Activated CD4-positive, alpha-beta T cell treated with anti-CD3 and anti-CD28 coated beads, Interleukin-2, amount 10 ng/mL, durations not matched to agents 24 days and 14 days (primary cell): ENCODE measurements at regions of chr2 and their contacts with region 1.

Region 1: GRCh38 chr2:94986392-94986963 is 39.0 kb upstream of the MAL start:
- DNase-seq: peak; percentile 85
- H3K4me3 Mint-ChIP-seq: no peak overlapping the region
- H3K27ac Mint-ChIP-seq: no peak overlapping the region
- H3K4me1 Mint-ChIP-seq: no peaks in the 10 kb centered on the region
- H3K27me3 Mint-ChIP-seq: peaks cover 19% of the 10 kb centered on the region

Region 2: DNA sequence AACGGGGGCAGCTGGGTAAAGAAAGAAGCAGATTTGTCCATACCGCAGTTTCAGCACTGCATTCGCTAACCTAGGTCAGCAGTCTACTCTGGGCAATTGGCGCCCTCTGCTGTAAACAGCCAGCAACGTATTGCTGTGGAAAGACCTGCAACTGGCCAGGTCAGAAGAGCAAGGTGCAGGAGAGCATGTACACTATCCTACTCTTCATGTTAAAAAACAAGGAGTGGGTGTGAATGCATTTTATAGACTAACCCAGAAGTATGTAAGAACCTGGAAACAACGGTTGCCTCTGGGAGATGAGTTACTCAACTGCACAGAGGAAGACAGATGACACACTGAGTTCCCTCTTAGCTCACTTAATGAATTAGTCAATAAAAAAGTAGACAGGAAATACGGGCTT is 128.9 kb after region 1 on chr2:
- intact Hi-C with region 1: loop called (anchors 1 kb)
- DNase-seq: peak; percentile 93
- H3K4me3 Mint-ChIP-seq: no peak overlapping the region
- H3K27ac Mint-ChIP-seq: no peak overlapping the region
- H3K4me1 Mint-ChIP-seq: peaks cover 40% of the 10 kb centered on the region
- H3K27me3 Mint-ChIP-seq: no peaks in the 10 kb centered on the region